ENCODE measurements at regions of chr1 and their contacts with region 1.

Region 1: DNA sequence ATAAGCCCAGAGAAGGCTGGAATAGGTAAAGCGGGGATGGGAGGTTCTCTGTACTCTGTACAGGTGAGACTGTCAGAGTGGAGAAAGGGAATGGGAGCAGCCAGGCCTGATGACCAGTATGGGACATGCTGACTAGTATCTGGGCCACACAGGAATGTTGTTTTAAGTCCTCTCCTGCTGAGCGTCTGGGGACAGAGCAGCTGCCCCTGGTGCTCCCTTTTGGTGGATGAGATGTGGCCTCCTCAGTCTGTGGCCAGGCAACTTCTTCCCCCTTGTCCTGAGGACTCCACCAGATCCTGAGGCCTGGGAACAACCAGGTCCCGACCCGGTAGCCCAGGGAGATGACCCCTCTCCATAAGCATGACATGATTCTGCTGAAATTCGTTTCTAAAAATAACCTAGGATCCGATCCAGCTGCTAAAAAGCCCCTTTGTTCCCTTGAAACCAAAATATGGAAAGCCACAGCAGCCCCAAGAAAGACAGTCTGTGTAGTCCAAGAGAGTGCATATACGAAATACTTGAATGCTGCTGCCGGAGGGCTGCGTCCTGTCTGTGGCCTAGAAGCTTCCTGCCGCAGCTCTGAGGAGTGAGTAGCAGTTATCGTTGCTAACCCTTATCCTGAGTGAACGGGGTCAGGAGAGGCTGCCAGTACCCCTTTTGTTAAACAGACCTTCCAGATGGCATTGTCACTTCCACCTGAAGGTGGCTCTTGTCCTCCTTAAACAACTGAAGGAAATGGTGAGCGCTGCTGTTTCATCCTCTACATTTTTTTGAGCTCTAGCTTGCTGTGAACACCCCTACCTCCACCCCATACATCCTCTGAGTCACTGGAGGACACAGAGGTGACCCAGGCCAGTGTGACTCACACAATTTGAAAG is 47.2 kb downstream of the ATP2B4 start:
- DNase-seq: peak; percentile 97
- H3K4me3 ChIP-seq: no peak overlapping the region
- H3K27ac ChIP-seq: peak overlapping the region; percentile 88
- H3K4me1 ChIP-seq: peaks cover 41% of the 10 kb centered on the region
- H3K27me3 ChIP-seq: no peaks in the 10 kb centered on the region
- CTCF ChIP-seq: no peak
- POLR2A ChIP-seq: no peak

Region 2: DNA sequence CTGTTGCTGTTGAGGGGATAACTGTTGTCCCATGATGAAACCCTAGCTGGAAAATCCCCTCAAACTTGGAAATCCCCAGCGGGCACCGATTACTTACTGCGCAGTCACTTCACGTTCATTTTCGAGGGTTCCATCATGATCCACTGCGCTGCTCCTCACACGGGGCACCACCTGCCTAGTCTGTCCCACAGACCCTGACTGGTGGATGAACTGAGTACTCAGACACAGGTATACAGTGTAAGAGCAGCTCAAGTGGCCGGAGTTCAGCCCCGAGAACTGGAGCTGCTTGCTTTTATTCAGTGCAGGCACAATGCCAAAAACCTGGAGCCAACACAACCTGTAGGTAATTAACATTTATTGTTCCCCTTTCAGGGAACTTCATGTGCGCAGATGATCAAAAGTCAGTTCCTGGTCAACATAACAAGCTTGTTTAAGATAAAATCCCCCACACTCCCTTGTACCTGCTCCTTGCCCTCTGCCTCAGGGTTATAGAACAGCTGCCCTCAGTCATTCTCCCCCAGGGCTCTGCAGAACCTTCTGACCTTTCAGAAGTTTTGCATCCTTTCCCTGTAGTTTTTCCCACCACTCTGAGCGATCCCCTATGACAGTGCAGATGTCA is 244.7 kb before region 1 on chr1:
- CTCF ChIA-PET with region 1: no interaction called
- POLR2A ChIA-PET with region 1: no interaction called
- dilution Hi-C with region 1: no loop called
- intact Hi-C with region 1: no loop called
- DNase-seq: no peak
- H3K4me3 ChIP-seq: no peak overlapping the region
- H3K27ac ChIP-seq: no peak overlapping the region
- H3K4me1 ChIP-seq: no peaks in the 10 kb centered on the region
- H3K27me3 ChIP-seq: peaks cover 17 to 18% of the 10 kb centered on the region in 2 experiments
- CTCF ChIP-seq: no peak
- POLR2A ChIP-seq: no peak

Region 3: DNA sequence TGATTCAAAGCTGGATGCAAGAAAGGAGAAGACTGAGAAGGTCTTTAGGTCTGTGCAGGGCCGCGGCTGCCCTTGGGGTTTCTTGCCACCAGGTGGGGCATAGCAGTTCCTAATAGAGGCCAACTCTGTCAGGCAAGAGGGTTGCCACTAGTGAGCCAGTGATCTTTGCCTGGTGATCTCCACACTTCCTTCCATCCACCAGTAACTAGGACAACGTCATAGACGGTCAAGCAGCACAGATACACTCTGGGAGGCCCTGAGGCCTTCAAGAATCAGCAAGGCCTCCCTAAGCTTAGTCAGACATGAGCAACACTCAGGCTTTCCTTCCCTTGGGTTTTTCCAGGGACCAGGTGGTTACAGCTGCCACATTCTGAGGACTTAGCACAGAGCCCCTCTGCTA is 80.1 kb before region 1 on chr1:
- CTCF ChIA-PET with region 1: no interaction called
- POLR2A ChIA-PET with region 1: no interaction called
- dilution Hi-C with region 1: no loop called
- intact Hi-C with region 1: no loop called
- DNase-seq: no peak
- H3K4me3 ChIP-seq: no peak overlapping the region
- H3K27ac ChIP-seq: no peak overlapping the region
- H3K4me1 ChIP-seq: peaks cover 4% of the 10 kb centered on the region
- H3K27me3 ChIP-seq: peaks cover 0 to 4% of the 10 kb centered on the region in 2 experiments
- CTCF ChIP-seq: peak; percentile 10 to 13
- POLR2A ChIP-seq: no peak

Region 4: GRCh38 chr1:203649999-203650855 is 23.6 kb before region 1 on chr1:
- CTCF ChIA-PET with region 1: interaction called, 6 read pairs
- POLR2A ChIA-PET with region 1: interaction called, 3 read pairs
- dilution Hi-C with region 1: no loop called
- intact Hi-C with region 1: loop called (anchors 2 kb)
- DNase-seq: peak; percentile 85
- H3K4me3 ChIP-seq: no peak overlapping the region
- H3K27ac ChIP-seq: no peak overlapping the region
- H3K4me1 ChIP-seq: peaks cover 23% of the 10 kb centered on the region
- H3K27me3 ChIP-seq: no peaks in the 10 kb centered on the region
- CTCF ChIP-seq: no peak
- POLR2A ChIP-seq: no peak

Region 5: DNA sequence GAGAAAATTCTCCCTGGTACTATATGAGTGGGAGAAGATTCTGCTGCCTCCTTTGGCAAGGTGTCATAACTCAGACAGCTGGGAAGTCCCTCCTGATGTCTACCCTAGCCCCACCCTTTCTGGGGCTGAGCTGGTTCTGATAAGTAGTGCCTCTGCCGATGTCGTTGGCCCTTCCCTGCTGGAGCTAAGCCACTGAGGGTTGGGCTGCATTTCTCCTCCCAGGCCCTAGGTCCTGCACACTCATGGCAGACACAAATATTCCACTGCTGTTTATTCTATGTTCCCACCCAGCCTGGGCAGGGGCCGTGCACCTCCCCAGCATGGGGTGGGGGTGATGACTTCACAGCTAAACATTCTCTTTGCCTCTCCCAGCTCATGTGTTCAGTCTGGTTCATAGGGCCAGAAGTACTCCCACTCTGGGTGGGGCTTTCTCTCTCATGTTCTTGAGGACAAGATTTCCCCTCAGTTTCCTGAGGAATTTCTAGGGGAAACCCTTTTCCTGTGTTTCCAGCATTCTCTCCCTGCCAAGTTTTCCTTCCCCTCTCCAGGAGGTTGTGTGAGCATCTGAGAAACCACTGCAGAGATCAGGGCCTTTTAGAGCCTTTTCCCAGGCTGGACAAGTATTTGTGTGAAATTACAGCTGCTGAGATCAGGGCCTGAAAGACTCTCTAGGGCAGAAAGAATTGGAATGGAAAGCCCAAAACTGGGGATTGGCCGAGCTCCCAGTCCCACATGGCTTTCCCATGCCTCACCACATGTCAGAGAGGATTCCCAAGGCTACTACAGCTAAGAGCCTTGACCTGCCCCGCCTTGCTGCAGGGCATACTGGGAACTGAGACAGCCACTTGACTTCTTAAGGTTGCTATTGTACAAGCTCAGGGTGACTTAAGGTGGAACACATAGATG is 19.0 kb after region 1 on chr1:
- CTCF ChIA-PET with region 1: interaction called, 29 read pairs
- POLR2A ChIA-PET with region 1: interaction called, 5 read pairs
- dilution Hi-C with region 1: no loop called
- intact Hi-C with region 1: loop called (anchors 1 kb)
- DNase-seq: peak; percentile 88
- H3K4me3 ChIP-seq: no peak overlapping the region
- H3K27ac ChIP-seq: peak overlapping the region; percentile 48
- H3K4me1 ChIP-seq: peaks cover 20% of the 10 kb centered on the region
- H3K27me3 ChIP-seq: no peaks in the 10 kb centered on the region
- CTCF ChIP-seq: no peak
- POLR2A ChIP-seq: no peak